PC-9 (cell line): ENCODE measurements at regions of chr16 and their contacts with region 1.

Region 1: DNA sequence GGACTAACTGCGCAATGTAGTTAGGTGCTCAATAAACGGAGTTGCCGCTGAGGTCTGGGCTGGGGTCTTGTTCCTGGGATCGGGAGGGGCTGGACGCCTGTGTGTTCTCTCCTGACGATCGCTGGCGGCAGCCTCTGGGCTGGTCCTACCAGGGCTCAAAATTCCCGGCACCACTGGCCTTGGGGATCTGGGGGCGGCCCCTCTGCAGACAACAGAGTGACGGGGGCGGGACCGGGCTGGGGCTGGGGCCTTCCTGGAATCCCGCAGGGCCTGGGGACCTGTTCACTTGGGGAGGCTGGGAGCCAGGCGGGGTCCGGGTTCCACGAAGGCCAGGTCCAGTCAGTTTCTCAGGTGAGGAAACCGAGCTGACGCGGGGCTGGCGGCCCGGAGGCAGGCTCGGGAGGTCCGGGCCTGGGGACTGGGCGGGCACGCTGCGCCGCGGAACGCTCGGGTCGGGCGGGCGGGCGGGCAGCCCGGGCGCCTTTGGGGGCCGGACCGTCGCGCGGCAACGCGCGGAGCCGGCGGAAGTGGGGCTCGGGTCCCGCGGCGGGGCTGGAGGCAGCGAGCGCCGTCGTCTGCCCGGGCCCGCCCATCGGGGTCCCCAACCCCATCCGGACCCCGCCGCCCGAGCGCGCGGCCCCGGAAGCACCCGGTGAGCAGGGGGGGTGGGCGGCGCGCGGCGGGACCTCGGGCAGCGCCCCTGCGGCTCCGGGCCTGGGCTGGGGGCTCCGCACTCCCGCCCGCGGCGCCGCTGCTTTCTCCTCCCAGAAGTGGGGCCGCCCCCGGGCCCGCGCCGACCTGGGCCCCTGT is at the start of gene PIGQ:
- DNase-seq: peak in 1 of 2 experiments; percentile 72
- H3K4me3 ChIP-seq: peak within 1 kb of the TSS; percentile 84
- H3K27ac ChIP-seq: no peak within 1 kb of the TSS
- H3K4me1 ChIP-seq: peaks cover 11% of the 10 kb centered on the region
- H3K27me3 ChIP-seq: no peaks in the 10 kb centered on the region
- CTCF ChIP-seq: no peak
- total RNA-seq, gene PIGQ: 72.5 and 96.1 TPM in 2 replicates

Region 2: DNA sequence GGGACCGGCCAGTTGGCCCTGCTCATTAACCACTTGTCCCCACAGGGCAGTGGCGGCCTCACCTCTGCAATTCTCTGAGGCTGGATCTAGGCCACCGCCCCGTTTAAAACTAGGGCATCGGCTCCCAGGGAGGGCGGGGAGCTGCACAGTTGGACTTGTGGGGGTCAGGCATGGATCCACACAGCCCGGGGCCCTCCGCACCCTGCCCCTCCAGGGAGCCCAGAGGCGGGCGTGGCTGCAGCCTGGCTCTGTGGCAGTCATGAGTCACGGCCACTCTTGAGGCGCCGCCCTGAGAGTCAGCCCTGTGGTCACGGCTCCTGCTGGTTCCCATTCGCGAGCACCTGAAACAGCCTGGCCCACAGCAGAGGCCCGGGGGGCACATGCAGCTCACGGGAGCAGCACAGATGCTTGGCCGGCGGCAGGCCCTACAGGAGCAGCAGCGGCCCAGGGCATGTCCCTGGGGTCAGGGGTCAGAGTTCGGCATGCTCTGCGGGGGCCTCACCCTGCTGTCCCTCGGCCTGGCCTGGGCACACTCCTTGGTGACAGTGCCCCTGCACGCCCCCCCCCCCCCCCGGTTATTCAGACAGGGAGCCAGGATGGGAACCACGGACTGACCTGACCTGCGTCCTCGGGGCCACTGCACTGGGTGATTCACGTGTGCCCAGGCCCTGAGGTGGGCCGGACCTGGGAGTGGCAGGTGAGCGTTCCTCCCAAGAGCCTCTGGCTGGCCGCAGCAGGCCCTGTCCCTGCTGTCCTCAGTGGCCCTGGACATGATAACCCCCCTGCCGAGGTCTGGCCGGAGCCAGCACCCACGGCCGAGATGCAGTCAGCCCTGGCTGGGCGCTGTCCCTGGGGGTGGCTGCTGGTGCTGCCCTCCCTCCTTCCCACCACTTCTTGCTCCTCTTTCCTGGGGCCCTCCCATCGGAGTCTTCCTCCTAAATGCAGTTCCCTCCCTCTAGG is 33.9 kb before region 1 on chr16:
- CTCF ChIA-PET with region 1: no interaction called
- POLR2A ChIA-PET with region 1: interaction called, 5 read pairs
- intact Hi-C with region 1: loop called (anchors 2 kb)
- DNase-seq: peak; percentile 92 to 99
- H3K4me3 ChIP-seq: no peak overlapping the region
- H3K27ac ChIP-seq: peak overlapping the region; percentile 66
- H3K4me1 ChIP-seq: peaks cover 33% of the 10 kb centered on the region
- H3K27me3 ChIP-seq: no peaks in the 10 kb centered on the region
- CTCF ChIP-seq: no peak; the same call in 1 of the 2 replicates